ENCODE measurements at regions of chr5 and their contacts with region 1.

Region 1: DNA sequence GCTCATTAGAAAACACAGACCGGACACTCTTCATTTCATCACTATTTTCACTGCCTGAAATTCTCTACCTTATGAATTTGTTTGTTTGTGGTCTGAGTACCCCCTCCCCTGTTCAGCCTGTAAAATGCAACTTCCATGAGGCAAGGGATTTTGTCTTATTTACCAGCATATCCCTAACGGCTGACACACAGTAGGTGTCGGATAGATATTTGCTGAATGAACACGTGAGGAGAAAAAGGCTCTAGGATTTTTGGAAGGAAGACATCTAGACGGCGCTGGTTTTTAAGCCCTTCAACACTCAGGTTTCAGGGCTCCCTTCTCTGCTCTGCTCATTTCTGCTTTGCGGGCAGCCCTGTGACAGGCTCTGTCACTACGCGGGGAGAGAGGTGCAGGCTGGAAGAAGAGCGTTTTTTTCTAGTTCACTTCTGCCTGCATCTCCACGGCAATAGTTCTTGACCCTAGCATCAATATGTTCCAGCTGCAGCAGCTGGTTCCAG is 41.0 kb downstream of the KCNMB1 start:
- DNase-seq: peak; percentile 39 to 54 (median 54)
- H3K4me3 ChIP-seq: no peak overlapping the region
- H3K27ac ChIP-seq: no peak overlapping the region
- H3K4me1 ChIP-seq: peaks cover 0 to 17% (median 9%) of the 10 kb centered on the region in 4 experiments
- H3K27me3 ChIP-seq: no peaks in the 10 kb centered on the region

Region 2: GRCh38 chr5:170173235-170173634 is 174.9 kb before region 1 on chr5:
- CTCF ChIA-PET with region 1: no interaction called
- POLR2A ChIA-PET with region 1: no interaction called
- DNase-seq: no peak
- H3K4me3 ChIP-seq: no peak overlapping the region
- H3K27ac ChIP-seq: no peak overlapping the region
- H3K4me1 ChIP-seq: no peaks in the 10 kb centered on the region
- H3K27me3 ChIP-seq: peaks cover 0 to 6% (median 0%) of the 10 kb centered on the region in 5 experiments

Region 3: GRCh38 chr5:170225326-170226128 is 122.7 kb before region 1 on chr5:
- CTCF ChIA-PET with region 1: interaction called, 75 read pairs
- POLR2A ChIA-PET with region 1: no interaction called
- DNase-seq: peak; percentile 60 to 78 (median 68)
- H3K4me3 ChIP-seq: no peak overlapping the region
- H3K27ac ChIP-seq: no peak overlapping the region
- H3K4me1 ChIP-seq: peaks cover 0 to 4% (median 2%) of the 10 kb centered on the region in 4 experiments
- H3K27me3 ChIP-seq: no peaks in the 10 kb centered on the region

Measured in common myeloid progenitor, CD34-positive (primary cell).